ENCODE measurements at regions of chr1 and their contacts with region 1.

Region 1: DNA sequence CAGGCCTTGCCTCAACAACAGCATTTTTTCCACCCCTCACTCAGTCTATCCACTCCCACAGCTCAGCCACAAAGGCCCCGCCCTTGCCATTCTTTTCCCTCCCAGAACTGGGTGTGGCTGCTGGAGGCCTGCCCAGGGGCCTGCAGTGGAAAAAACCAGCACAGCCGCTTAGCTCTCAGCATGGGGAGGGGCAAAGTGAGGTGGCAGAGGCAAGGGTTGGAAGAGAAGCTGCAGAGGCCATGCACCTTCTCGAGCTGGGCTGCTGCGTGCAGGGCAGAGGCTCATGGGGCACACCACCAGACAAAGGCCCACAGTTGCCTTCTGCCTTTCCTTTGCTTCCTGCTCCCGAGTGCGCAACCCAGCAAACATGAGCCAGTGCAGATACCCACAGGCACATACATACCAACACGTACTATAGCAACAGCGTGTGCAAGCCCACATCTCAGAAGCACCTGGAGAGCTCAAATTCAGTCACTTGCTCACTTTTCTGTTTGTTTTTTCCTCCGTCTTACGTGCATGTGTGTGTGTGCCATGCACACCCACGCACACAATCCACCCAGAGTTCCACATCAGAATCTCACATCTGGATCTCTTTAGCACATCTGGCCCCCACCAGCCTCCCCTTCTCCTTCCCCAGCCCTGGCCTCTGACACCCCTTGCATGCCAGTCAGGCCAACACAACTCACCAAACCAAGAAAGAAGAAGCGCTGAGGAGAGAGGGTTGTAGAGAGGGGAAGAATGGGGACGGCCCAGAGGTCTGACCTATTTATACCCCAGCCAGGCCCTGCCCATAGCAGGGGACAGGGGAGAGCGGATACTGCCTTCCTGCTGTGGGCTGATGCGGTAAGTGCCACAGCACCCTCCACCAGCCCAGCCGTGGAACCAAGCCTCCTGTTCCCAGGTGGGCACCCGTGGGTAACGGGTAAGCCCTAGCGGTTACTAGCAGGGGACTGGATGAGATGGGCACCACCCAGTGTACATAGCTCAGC is at the start of gene S100A4:
- H3K4me3 ChIP-seq: no peak within 1 kb of the TSS
- H3K27ac ChIP-seq: peak within 1 kb of the TSS; percentile 11; the same call in 1 of the 2 replicates
- H3K4me1 ChIP-seq: peaks cover 2% of the 10 kb centered on the region; the same call in 1 of the 2 replicates
- CTCF ChIP-seq: no peak

Region 2: DNA sequence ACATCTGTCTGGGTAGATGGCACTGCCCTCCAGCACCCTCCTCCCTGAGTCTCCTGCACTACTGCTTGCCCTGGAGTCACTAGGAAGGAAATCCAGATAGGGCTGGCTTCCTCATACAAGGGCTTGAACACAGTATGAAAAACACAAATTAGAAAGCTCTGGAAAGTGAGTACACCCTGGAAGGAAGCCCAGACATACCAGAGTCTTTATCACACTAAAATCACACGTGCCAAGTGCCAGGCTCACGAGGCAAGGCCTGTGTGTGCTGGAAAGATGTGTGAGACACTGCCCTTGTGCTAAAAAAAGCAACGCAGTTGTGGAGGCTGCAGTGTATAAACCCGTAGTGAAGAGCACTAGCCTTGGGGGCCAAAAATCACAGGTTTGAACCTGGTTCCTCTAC is 56.6 kb before region 1 on chr1:
- CTCF ChIA-PET with region 1: no interaction called
- POLR2A ChIA-PET with region 1: no interaction called
- H3K4me3 ChIP-seq: no peak overlapping the region
- H3K27ac ChIP-seq: no peak overlapping the region
- H3K4me1 ChIP-seq: no peaks in the 10 kb centered on the region; the same call in 1 of the 2 replicates
- CTCF ChIP-seq: no peak

Region 3: DNA sequence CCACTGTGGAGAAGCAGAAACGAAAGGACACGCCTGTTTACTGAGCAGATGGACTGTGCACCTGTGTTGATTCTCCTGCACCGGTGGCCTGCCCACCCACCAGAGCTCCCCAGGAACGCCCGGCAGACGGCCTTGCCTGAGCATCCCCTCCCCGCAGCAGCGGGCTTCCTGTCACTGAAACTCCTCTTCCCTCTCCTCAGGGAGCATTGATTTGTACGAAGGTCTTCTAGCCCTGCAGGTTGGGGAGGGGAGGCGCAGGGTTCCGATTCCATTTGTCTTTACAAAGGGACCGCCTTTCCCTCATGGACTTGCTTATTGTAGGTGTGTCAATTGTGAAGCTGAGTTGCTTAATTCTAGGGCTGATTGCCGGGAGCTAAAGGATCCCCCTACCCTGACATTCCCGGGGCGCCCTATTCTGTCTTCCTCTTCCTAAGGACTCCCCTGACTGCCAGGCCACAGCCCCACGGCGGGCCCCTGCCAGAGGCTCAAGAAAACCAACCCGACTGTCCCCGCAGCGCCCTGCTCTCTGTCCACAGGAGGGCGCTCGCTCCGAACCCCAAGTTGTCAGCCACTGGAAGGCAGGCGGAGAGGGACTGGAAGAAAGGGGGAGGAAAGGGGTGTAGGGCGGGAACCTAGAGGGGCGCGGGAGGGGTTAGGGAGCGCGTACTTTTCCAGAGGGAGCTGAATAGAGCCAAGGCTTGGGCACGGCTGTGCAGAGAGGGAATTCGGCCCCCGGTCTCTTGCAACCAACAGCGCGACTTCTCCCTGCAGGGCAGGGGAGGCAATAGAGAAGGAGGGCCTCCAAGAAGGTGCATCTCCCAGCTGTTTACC is 12.4 kb before region 1 on chr1:
- CTCF ChIA-PET with region 1: interaction called, 26 read pairs
- POLR2A ChIA-PET with region 1: interaction called, 3 read pairs
- H3K4me3 ChIP-seq: no peak overlapping the region
- H3K27ac ChIP-seq: no peak overlapping the region
- H3K4me1 ChIP-seq: no peaks in the 10 kb centered on the region
- CTCF ChIP-seq: no peak

Region 4: DNA sequence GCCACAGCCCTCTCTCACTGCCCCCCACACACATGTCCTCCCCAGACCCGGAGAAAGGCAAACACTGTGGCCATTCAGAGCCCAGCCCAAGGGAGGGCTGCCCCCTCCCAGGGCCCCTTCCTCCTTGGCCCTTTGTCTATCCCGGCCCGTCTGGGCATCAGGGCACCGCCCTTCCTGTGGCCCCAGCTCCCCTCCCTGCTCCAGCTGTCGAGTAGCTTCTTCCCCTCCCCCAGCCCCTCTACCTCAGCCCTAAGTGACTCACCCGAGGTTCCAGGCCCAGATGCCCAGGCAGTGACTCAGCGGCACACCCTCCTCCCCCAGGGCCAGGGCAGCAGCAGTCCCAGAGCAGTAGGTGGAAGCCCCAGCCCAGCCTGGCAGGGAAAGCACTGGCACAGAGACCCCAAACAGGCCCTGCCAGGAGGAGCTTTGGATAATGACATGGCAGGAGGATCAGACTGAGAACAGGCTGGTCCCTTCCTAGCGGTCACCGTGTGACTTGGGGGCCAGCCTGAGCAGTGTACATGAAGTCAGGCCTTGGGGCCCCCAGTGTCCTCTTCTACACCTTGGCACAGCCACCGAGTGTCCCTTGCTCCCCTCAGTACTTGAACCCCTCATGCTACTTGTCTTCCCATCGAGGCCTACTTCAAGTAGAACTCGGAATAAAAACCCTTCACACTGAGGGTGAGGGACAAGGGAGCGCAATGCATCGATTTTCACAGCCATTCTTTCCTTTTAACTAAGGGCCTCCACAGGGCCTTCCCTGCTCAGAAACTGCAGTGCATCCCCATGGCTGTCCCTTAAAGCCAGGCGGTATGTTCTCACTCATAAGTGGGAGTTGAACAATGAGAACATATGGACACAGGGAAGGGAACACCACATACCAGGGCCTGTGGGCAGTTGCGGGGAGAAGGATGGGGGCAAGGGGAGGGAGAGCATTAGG is 21.3 kb after region 1 on chr1:
- CTCF ChIA-PET with region 1: interaction called, 23 read pairs
- POLR2A ChIA-PET with region 1: interaction called, 27 read pairs
- H3K4me3 ChIP-seq: no peak overlapping the region
- H3K27ac ChIP-seq: peak overlapping the region; percentile 77
- H3K4me1 ChIP-seq: peaks cover 7% of the 10 kb centered on the region
- CTCF ChIP-seq: no peak

Region 5: GRCh38 chr1:153572569-153573015 is 27.2 kb after region 1 on chr1:
- CTCF ChIA-PET with region 1: interaction called, 23 read pairs
- POLR2A ChIA-PET with region 1: interaction called, 8 read pairs
- H3K4me3 ChIP-seq: no peak overlapping the region
- H3K27ac ChIP-seq: no peak overlapping the region
- H3K4me1 ChIP-seq: no peaks in the 10 kb centered on the region
- CTCF ChIP-seq: peak; percentile 69; the same call in 1 of the 2 replicates

Measured in HEK293 (cell line).